ENCODE measurements at regions of chr2 and their contacts with region 1.

Region 1: GRCh38 chr2:216698895-216699294 is 3.5 kb upstream of the IGFBP5 start:
- DNase-seq: peak; percentile 84
- ATAC-seq: peak; percentile 43
- H3K4me3 ChIP-seq: no peak overlapping the region
- H3K27ac ChIP-seq: peak overlapping the region; percentile 68
- H3K4me1 ChIP-seq: peaks cover 28% of the 10 kb centered on the region
- H3K27me3 ChIP-seq: no peaks in the 10 kb centered on the region
- CTCF ChIP-seq: peak; percentile 81
- POLR2A ChIP-seq: no peak
- RAD21 ChIP-seq: peak; percentile 90

Region 2: GRCh38 chr2:216775043-216775453 is 76.2 kb after region 1 on chr2:
- CTCF ChIA-PET with region 1: interaction called, 8 read pairs
- POLR2A ChIA-PET with region 1: interaction called, 3 read pairs
- dilution Hi-C with region 1: no loop called
- in situ Hi-C with region 1: no loop called
- intact Hi-C with region 1: loop called (anchors 2 kb)
- DNase-seq: peak; percentile 99
- ATAC-seq: peak; percentile 91
- H3K4me3 ChIP-seq: no peak overlapping the region
- H3K27ac ChIP-seq: peak overlapping the region; percentile 66
- H3K4me1 ChIP-seq: peaks cover 11% of the 10 kb centered on the region
- H3K27me3 ChIP-seq: no peaks in the 10 kb centered on the region
- CTCF ChIP-seq: peak; percentile 20; the same call in 1 of the 2 replicates
- POLR2A ChIP-seq: no peak
- RAD21 ChIP-seq: 0 out of 2 replicates have a peak, but pooled peaks have one; percentile 32

Region 3: GRCh38 chr2:216799873-216800431 is 101.1 kb after region 1 on chr2:
- CTCF ChIA-PET with region 1: no interaction called
- POLR2A ChIA-PET with region 1: no interaction called
- dilution Hi-C with region 1: no loop called
- in situ Hi-C with region 1: no loop called
- intact Hi-C with region 1: no loop called
- DNase-seq: peak; percentile 74
- ATAC-seq: peak; percentile 90
- H3K4me3 ChIP-seq: no peak overlapping the region
- H3K27ac ChIP-seq: peak overlapping the region; percentile 58; the same call in 1 of the 2 replicates
- H3K4me1 ChIP-seq: peaks cover 13% of the 10 kb centered on the region
- H3K27me3 ChIP-seq: no peaks in the 10 kb centered on the region
- CTCF ChIP-seq: no peak
- POLR2A ChIP-seq: no peak
- RAD21 ChIP-seq: no peak

Region 4: GRCh38 chr2:217054791-217055190 is 355.9 kb after region 1 on chr2:
- CTCF ChIA-PET with region 1: no interaction called
- POLR2A ChIA-PET with region 1: no interaction called
- dilution Hi-C with region 1: no loop called
- in situ Hi-C with region 1: loop called (anchors 10 kb)
- intact Hi-C with region 1: loop called (anchors 5 kb)
- DNase-seq: no peak
- ATAC-seq: peak; percentile 16; the same call in 1 of the 2 replicates
- H3K4me3 ChIP-seq: no peak overlapping the region
- H3K27ac ChIP-seq: peak overlapping the region; percentile 13; the same call in 1 of the 2 replicates
- H3K4me1 ChIP-seq: peaks cover 3% of the 10 kb centered on the region
- H3K27me3 ChIP-seq: no peaks in the 10 kb centered on the region; the same call in 1 of the 2 replicates
- CTCF ChIP-seq: no peak
- POLR2A ChIP-seq: no peak
- RAD21 ChIP-seq: no peak

Region 5: GRCh38 chr2:217166241-217166850 is 467.5 kb after region 1 on chr2:
- CTCF ChIA-PET with region 1: interaction called, 12 read pairs
- POLR2A ChIA-PET with region 1: interaction called, 13 read pairs
- dilution Hi-C with region 1: loop called (anchors 25 kb)
- in situ Hi-C with region 1: loop called (anchors 10 kb)
- intact Hi-C with region 1: loop called (anchors 1 kb)
- DNase-seq: peak; percentile 73
- ATAC-seq: peak; percentile 49
- H3K4me3 ChIP-seq: no peak overlapping the region
- H3K27ac ChIP-seq: peak overlapping the region; percentile 65
- H3K4me1 ChIP-seq: peaks cover 19% of the 10 kb centered on the region
- H3K27me3 ChIP-seq: no peaks in the 10 kb centered on the region
- CTCF ChIP-seq: peak; percentile 66
- POLR2A ChIP-seq: no peak
- RAD21 ChIP-seq: peak; percentile 85

Region 6: GRCh38 chr2:217289877-217290279 is 591.0 kb after region 1 on chr2:
- CTCF ChIA-PET with region 1: interaction called, 3 read pairs
- POLR2A ChIA-PET with region 1: interaction called, 3 read pairs
- dilution Hi-C with region 1: no loop called
- in situ Hi-C with region 1: loop called (anchors 10 kb)
- intact Hi-C with region 1: no loop called
- DNase-seq: peak; percentile 69
- ATAC-seq: peak; percentile 31
- H3K4me3 ChIP-seq: no peak overlapping the region
- H3K27ac ChIP-seq: peak overlapping the region; percentile 69
- H3K4me1 ChIP-seq: peaks cover 30% of the 10 kb centered on the region
- H3K27me3 ChIP-seq: no peaks in the 10 kb centered on the region
- CTCF ChIP-seq: no peak
- POLR2A ChIP-seq: no peak
- RAD21 ChIP-seq: no peak

Region 7: DNA sequence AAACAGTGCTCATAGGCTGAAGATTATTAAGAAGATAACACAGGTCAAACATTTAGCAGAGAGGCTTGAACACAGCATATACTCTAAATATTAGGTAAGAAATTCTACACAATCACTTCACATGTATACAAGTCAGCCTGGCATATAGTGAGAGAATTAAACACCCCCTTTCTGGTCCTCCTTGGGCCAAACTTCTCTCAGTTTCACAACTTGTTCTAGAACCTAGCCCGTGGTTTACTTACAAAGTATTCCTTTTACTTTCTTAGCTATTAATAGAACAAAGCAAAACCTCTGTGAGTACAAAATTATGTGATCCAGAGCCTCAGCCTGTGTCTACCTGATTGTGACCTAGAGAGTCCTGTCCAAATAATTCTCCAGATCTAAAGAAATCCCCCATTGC is 741.1 kb after region 1 on chr2:
- CTCF ChIA-PET with region 1: no interaction called
- POLR2A ChIA-PET with region 1: no interaction called
- dilution Hi-C with region 1: no loop called
- in situ Hi-C with region 1: no loop called
- intact Hi-C with region 1: loop called (anchors 5 kb)
- DNase-seq: peak; percentile 22
- ATAC-seq: no peak; the same call in 1 of the 2 replicates
- H3K4me3 ChIP-seq: no peak overlapping the region
- H3K27ac ChIP-seq: no peak overlapping the region
- H3K4me1 ChIP-seq: peaks cover 10% of the 10 kb centered on the region
- H3K27me3 ChIP-seq: no peaks in the 10 kb centered on the region
- CTCF ChIP-seq: no peak
- POLR2A ChIP-seq: no peak
- RAD21 ChIP-seq: no peak

Region 8: DNA sequence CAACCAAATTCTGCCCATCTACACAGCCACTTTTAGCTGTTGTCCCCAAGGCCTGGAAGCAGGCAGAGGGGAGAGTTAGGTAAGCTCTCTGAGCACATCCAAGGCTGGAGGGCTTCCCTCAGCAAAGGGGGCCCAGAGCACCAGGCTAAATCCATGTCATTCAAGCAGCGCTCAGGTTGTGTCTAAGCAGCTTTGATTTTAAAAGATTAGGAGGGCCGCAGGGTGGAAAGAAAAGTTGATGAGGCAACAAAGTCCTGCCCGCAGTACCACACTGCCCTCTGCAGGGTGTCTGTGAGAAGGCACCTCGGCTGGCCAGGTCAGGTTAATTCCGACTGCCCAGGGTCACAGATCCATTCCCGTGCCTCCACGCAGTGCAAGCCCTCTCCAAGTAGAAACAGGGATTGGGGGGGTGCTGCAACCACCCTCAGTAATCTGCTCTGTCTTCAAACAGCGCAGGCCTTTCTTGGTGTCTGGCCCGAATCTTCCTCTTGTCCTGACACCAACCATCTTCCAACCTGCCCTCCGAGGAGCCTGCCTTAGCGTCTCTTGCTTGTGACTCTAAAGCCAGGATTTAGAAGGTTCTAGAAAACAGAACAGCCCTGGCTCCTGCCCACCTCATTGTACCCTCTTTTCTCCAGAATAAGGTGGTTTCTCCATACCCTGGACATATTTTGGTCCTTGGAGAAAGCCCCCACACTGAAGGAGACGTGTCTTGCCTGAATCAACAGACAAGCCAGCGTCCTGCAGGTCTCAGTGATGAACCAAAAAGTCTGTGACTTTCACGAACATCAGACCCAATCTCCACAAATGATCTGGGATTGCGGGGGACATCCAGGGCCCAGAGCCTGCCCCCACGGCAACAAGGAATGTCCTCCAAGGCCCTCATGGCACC is 1014.7 kb after region 1 on chr2:
- CTCF ChIA-PET with region 1: interaction called, 4 read pairs
- POLR2A ChIA-PET with region 1: interaction called, 8 read pairs
- dilution Hi-C with region 1: no loop called
- in situ Hi-C with region 1: loop called (anchors 5 kb)
- intact Hi-C with region 1: loop called (anchors 1 kb)
- DNase-seq: peak; percentile 72
- ATAC-seq: peak; percentile 83
- H3K4me3 ChIP-seq: no peak overlapping the region
- H3K27ac ChIP-seq: peak overlapping the region; percentile 93
- H3K4me1 ChIP-seq: peaks cover 35% of the 10 kb centered on the region
- H3K27me3 ChIP-seq: no peaks in the 10 kb centered on the region
- CTCF ChIP-seq: peak; percentile 97
- POLR2A ChIP-seq: peak; percentile 54; the same call in 1 of the 2 replicates
- RAD21 ChIP-seq: peak; percentile 99